ENCODE measurements at regions of chr18 and their contacts with region 1.

Region 1: DNA sequence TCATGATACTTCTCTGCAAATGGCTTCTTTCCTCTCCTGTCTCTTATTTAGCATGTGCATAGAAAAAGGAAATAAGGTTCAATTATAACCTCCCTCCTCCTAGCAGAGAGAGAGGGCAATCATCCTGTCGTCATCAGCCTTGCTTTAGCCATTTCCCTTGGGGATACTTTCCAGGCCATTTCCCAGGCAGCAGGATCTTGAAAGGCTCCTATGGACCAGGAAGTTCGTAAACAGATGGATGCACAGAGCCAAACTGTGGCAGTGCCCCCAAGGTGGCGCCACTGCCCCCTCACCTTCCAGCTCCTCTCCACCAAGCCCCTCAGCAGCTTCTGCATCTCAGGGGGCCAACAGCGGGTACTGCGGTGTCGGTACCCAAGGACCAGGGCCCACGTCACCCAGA is 157.4 kb downstream of the DTNA start:
- DNase-seq: no peak
- H3K4me3 ChIP-seq: no peak overlapping the region
- H3K27ac ChIP-seq: no peak overlapping the region
- H3K27me3 ChIP-seq: no peaks in the 10 kb centered on the region
- CTCF ChIP-seq: peak; percentile 29; the same call in 1 of the 2 replicates

Region 2: DNA sequence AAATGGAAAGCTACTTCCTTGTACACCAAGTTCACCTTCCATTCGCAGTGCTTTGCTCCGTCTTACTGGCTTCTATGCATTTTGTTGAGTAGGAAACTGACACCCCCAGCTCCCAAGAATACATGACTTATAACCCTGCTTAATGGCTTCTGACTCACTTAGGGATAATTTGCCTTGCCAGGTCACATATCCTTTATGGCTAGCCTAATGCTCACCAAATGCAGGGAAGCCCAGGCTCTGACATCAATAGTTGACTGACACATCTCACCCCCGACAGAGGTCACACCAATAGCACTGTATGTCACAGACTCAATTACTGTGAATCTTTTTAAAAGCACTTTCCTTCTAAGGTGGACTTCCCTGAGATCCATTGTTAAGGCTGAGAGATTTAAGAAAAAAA is 10.2 kb before region 1 on chr18:
- CTCF ChIA-PET with region 1: interaction called, 11 read pairs
- POLR2A ChIA-PET with region 1: no interaction called
- DNase-seq: no peak
- H3K4me3 ChIP-seq: no peak overlapping the region
- H3K27ac ChIP-seq: no peak overlapping the region
- H3K27me3 ChIP-seq: no peaks in the 10 kb centered on the region
- CTCF ChIP-seq: no peak

Region 3: DNA sequence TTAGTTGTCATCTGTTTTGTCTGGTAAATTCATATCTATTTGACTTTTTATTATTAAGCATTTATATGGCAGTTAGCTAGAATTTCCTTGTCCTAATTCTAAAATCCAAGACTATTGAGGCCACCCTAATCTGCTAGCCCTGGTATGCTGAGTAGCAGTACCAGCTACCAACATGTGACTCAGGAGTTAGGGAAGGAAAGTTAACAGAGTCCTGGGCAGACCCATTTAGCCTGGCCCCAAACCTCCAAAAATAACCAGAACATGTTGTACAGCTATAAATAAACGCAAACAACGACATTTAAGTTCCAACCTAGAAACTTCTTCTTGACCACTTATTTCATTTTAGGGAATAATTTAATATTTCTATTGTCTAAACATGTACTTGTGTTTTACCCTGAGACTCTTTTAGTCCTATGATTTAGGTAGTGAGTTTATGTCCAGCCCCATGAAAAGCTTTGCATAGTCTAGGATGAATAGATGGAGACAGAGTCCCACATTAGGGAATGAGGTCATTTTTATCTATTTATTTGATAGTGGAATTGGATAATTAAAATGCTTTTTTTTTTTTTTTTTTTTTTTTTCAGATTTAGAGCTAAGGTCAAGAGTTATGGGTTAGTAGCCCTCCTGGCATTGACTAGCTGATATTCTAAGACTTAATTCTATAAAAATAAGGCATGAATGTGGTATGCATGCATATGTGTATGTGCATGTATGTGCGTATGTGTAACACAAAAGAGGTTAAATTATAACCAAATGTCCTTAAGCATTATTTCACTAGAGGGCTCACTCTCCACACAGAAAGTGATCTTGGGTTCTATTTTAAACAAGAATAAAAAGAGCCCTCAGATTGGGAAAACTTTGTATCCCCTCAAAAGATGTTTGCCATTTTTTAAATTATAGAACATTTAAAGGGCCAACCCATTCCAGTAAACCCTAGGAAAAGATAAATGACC is 13.6 kb after region 1 on chr18:
- CTCF ChIA-PET with region 1: interaction called, 14 read pairs
- POLR2A ChIA-PET with region 1: no interaction called
- DNase-seq: no peak
- H3K4me3 ChIP-seq: no peak overlapping the region
- H3K27ac ChIP-seq: no peak overlapping the region
- H3K27me3 ChIP-seq: no peaks in the 10 kb centered on the region
- CTCF ChIP-seq: peak; percentile 50

Region 4: DNA sequence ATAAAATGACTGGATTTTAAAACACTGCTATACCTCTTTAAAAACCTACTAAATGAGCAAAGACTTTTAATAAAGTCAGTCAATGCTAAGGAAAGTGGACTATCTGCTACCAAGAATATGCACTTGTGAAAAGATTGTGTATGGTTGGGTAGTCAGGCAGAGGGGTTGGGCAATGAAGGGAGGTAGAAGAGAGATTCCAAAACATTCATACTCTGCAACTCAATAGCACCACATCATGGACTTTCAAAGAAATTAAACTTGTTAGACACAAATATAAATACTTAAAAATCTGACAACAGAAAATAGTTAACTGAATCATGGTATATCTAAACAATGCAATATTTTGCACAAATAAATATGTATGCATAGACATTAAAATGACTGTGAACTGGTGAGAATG is 33.8 kb after region 1 on chr18:
- CTCF ChIA-PET with region 1: interaction called, 15 read pairs
- POLR2A ChIA-PET with region 1: no interaction called
- DNase-seq: no peak
- H3K4me3 ChIP-seq: no peak overlapping the region
- H3K27ac ChIP-seq: no peak overlapping the region
- H3K27me3 ChIP-seq: no peaks in the 10 kb centered on the region
- CTCF ChIP-seq: no peak; the same call in 1 of the 2 replicates

Region 5: DNA sequence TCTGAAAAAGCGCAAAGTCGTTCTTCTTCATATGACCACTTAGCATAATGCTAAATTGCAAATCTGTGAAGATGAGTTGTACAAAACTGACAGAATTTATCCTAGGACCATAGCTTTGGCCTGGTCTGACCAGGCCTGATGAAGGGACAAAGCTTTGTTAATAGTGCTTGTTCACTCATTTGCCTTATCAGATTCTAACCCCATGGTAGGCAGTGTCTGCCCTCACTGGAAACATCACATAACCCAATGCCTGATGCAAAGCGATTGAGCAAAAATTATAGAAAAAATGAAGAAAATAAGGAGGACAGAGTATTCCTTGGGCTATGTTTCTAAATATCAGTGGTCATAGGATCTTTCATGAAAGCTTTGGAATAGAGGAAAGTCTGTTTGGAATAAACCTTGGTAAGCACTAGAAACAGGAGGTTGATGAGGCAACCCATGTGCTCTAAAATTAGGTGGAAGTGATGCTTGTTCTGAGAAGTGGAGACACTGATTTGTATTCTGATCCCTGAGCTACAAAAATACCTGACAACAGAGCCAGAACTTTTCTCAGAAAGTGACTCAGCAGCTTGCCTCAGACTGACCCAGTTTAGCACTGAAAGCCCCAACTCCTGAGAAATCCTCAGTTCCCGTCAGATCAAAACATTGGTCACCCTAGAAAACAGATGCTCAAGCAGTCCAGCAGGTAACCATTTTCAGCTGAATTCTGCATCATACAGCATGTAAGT is 42.3 kb after region 1 on chr18:
- CTCF ChIA-PET with region 1: interaction called, 10 read pairs
- POLR2A ChIA-PET with region 1: no interaction called
- DNase-seq: no peak
- H3K4me3 ChIP-seq: no peak overlapping the region
- H3K27ac ChIP-seq: no peak overlapping the region
- H3K27me3 ChIP-seq: no peaks in the 10 kb centered on the region
- CTCF ChIP-seq: no peak

Region 6: DNA sequence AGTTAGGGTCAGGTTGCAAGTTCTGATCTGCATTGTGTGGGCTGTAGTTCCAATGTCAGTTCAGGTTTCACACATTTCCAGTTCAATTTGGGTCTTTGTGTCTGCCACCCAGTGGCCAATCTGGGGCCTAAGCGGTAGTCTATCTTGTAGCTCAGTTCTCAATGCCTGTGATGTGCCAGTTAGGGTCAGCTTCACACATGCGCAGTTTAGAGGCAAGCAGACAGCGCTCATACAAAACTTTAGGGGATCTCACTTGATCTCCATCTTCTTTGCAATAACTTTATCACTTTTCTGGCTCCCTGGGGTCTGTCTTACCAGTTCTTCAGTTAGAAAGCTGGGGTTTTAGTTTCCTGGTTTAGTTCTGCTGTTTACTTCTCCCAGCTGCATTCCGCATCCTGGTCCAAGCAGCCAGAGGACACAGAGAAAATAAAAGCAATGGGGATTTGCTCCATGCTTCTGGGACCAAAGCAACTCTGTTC is 487.7 kb after region 1 on chr18:
- CTCF ChIA-PET with region 1: no interaction called
- POLR2A ChIA-PET with region 1: no interaction called
- DNase-seq: peak; percentile 71
- H3K4me3 ChIP-seq: peak overlapping the region; percentile 15; the same call in 1 of the 2 replicates
- H3K27ac ChIP-seq: no peak overlapping the region
- H3K27me3 ChIP-seq: no peaks in the 10 kb centered on the region
- CTCF ChIP-seq: peak; percentile 81

Measured in AG04450 (cell line).